ENCODE measurements at regions of chr2 and their contacts with region 1.

Region 1: GRCh38 chr2:189466660-189467059 is 25.4 kb downstream of the WDR75 start:
- DNase-seq: no peak
- CTCF ChIP-seq: peak; percentile 9

Region 2: GRCh38 chr2:189276277-189276676 is 190.4 kb before region 1 on chr2:
- CTCF ChIA-PET with region 1: no interaction called
- POLR2A ChIA-PET with region 1: no interaction called
- DNase-seq: no peak
- CTCF ChIP-seq: no peak

Region 3: GRCh38 chr2:189444322-189444721 is 22.3 kb before region 1 on chr2:
- CTCF ChIA-PET with region 1: interaction called, 15 read pairs
- POLR2A ChIA-PET with region 1: no interaction called
- DNase-seq: peak; percentile 20
- CTCF ChIP-seq: no peak

Region 4: DNA sequence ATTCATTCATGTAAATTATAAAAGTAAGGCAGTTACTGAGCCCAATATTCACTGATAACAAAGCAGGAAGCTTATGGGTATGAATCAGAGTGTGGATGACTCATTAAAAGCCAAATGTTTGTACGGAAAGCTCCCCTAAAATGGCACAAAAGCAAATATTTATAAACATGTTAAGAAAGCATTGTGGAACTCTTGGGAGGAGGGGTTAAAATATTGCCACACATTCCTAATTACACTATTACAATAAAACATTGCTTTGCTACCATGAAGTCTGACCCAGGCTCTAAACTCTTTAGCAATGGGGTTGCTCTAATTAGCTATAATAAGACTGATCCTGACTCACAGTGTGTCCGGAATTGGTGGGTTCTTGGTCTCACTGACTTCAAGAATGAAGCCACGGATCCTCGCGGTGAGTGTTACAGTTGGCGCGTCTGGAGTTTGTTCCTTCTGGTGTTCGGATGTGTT is 1293.1 kb after region 1 on chr2:
- CTCF ChIA-PET with region 1: no interaction called
- POLR2A ChIA-PET with region 1: no interaction called
- DNase-seq: no peak
- CTCF ChIP-seq: no peak

Measured in GM10248 (cell line).